AG04450 (cell line): ENCODE measurements at regions of chr10 and their contacts with region 1.

Region 1: GRCh38 chr10:93386631-93387369 is 95.3 kb downstream of the MYOF start:
- DNase-seq: no peak
- H3K4me3 ChIP-seq: no peak overlapping the region
- H3K27ac ChIP-seq: peak overlapping the region; percentile 47
- H3K27me3 ChIP-seq: no peaks in the 10 kb centered on the region
- CTCF ChIP-seq: no peak

Region 2: DNA sequence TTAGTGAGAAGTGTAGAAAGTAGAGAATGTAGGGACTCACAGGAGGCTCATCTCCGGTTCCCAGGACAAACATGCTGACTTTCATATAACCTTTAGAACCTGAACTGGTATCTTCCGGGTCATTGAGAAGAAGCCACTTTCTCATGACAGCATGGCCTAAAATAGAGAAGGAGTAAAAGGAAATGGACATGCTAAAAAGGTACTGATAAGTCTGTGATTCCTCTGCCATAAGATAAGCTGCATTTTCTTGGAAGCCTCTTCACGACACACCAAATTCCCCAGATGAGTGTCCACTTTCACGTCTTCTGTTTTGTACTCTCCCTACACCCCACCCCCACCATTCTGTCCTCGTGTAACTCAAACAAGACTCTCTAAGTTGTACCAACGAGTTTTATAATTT is 15.4 kb after region 1 on chr10:
- CTCF ChIA-PET with region 1: no interaction called
- POLR2A ChIA-PET with region 1: no interaction called
- DNase-seq: no peak
- H3K4me3 ChIP-seq: no peak overlapping the region
- H3K27ac ChIP-seq: no peak overlapping the region
- H3K27me3 ChIP-seq: no peaks in the 10 kb centered on the region
- CTCF ChIP-seq: no peak

Region 3: GRCh38 chr10:93458821-93459257 is 72.0 kb after region 1 on chr10:
- CTCF ChIA-PET with region 1: no interaction called
- POLR2A ChIA-PET with region 1: interaction called, 11 read pairs
- DNase-seq: peak; percentile 100
- H3K4me3 ChIP-seq: peak overlapping the region; percentile 41
- H3K27ac ChIP-seq: peak overlapping the region; percentile 99
- H3K27me3 ChIP-seq: no peaks in the 10 kb centered on the region
- CTCF ChIP-seq: no peak